Endothelial cell of umbilical vein (primary cell): ENCODE measurements at regions of chr1 and their contacts with region 1.

Region 1: GRCh38 chr1:181134543-181135362 is 46.3 kb downstream of the IER5 start:
- DNase-seq: peak; percentile 75
- H3K4me3 ChIP-seq: no peak overlapping the region
- H3K27ac ChIP-seq: peak overlapping the region; percentile 74
- H3K4me1 ChIP-seq: peaks cover 26% of the 10 kb centered on the region
- H3K27me3 ChIP-seq: no peaks in the 10 kb centered on the region
- CTCF ChIP-seq: no peak
- POLR2A ChIP-seq: no peak

Region 2: DNA sequence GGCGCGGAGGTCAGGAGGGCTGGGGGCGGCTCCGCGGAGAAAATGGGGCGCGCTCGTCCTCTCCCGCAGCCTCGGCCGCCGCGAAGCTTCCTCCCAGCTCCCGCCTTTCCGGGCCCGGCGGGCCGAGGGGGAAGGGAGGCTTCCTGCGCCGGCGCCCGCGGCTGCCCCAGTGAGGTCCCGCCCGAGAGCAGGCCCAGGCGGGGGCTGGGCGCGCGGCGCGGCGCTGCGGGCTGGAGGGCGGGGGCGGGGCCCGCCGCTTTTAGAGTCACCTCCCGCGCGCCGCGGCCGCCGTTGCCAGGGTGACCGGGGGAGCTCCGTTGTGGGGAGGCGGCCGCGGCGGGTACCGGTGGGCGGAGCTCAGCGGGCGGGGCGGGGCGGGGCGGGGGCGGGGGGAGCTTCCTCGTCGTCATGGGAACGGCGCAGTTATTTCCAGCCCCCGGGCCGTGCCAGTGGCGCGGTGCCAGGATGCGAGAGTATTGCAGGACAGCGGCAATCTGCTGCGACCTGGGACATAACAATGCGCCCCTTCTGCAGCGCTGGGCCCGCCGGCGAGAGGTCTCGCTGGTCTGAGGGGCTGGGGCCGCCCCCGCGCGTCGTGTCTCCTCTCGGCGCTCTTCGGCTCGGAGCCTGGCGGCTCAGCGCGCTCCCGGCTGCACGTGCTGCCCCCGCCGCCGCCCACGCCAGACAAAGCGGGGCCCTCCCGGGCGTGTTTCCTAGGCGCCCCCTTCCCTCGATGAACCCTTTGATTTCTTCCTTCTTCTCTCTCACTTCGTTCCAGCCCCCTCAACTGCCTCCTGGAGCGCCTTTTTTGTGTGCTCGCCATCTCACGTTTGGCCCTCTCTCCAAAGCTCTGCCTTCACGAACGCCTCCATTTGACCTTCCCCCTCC is 29.4 kb before region 1 on chr1:
- CTCF ChIA-PET with region 1: interaction called, 42 read pairs
- POLR2A ChIA-PET with region 1: interaction called, 25 read pairs
- dilution Hi-C with region 1: no loop called
- intact Hi-C with region 1: loop called (anchors 1 kb)
- DNase-seq: peak; percentile 86
- H3K4me3 ChIP-seq: peak overlapping the region; percentile 44 to 63 (median 46)
- H3K27ac ChIP-seq: peak overlapping the region; percentile 90
- H3K4me1 ChIP-seq: peaks cover 58% of the 10 kb centered on the region
- H3K27me3 ChIP-seq: no peaks in the 10 kb centered on the region
- CTCF ChIP-seq: no peak
- POLR2A ChIP-seq: peak; percentile 43

Region 3: DNA sequence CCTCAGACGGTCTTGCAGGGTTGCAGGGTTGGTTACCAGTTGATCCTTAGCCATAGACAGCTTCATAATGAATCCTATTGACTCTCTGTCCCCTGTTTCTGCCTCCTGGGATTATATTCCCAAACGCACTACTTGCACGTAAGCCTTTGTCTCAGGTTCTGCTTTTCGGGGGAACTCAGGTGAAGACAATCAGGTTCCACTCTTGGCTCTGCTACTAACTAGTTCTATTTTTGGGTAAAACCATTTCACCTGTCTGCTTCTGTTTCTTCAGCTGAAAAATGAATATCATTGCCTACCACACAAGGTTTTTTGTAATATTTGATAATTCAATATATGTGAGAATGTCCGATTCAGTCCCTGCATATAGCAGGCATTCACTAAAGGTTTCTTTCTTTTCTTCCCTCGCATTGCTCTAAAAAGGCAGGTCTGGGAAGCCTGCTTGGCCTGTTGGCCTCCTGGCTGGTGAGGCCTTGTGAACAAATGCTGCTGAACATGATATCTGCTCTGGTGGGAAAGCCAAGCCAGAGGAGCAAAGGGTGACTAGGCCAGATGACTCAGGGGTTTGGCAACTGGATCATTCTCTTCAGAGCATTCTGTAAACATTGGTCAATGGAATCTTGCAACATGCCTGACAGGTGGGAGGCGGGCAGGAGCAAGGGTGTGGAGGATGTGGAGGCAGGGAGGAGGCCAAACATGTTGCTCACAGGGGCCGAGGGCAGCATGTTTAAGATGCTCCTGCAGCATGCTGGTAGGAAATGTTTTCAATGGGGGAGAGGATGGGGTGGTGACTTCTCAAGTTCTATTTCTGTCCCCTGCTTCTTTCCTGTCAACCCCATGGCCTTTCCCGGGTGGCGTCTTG is 22.5 kb before region 1 on chr1:
- CTCF ChIA-PET with region 1: interaction called, 42 read pairs
- POLR2A ChIA-PET with region 1: no interaction called
- dilution Hi-C with region 1: no loop called
- intact Hi-C with region 1: loop called (anchors 1 kb)
- DNase-seq: peak; percentile 87
- H3K4me3 ChIP-seq: no peak overlapping the region
- H3K27ac ChIP-seq: no peak overlapping the region
- H3K4me1 ChIP-seq: peaks cover 23% of the 10 kb centered on the region
- H3K27me3 ChIP-seq: no peaks in the 10 kb centered on the region
- CTCF ChIP-seq: no peak
- POLR2A ChIP-seq: no peak

Region 4: DNA sequence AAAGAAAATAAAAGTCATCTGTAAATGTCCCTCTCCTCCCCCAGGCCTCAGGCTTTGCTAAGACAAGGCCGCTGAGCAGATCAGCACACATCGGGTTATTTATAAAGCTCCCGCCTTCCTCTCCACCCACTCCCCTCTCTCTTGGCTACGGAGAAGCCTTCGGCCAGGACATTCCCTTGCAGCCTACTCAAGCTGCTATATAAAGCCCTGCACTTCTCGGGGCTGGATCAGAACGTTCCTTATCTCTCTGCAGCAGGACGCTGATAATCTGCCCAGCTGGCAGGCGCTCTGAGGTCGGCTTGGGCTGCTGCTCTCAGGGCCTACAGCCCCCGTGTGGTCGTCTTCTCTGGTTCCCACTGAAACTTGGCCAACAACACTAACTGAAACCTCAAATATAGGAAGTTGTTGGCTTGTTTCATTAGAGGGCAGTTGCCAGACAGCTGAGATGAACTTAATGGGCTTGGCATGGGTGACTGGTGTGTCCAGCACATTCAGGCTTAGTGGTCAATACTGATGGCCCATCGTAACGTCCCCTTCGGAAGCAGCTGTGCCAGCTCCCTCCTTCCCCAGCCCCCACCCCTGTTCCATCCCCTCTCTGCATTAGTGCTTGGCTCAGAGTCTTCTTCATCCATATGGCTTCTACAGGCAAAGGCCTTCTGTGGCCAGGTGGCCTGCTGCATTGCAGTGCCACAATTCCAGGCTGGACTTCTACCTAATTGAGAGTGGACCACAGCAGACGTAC is 18.3 kb after region 1 on chr1:
- CTCF ChIA-PET with region 1: interaction called, 10 read pairs
- POLR2A ChIA-PET with region 1: interaction called, 4 read pairs
- dilution Hi-C with region 1: no loop called
- intact Hi-C with region 1: no loop called
- DNase-seq: peak; percentile 98
- H3K4me3 ChIP-seq: no peak overlapping the region
- H3K27ac ChIP-seq: no peak overlapping the region
- H3K4me1 ChIP-seq: peaks cover 7% of the 10 kb centered on the region
- H3K27me3 ChIP-seq: no peaks in the 10 kb centered on the region
- CTCF ChIP-seq: peak; percentile 31 to 72
- POLR2A ChIP-seq: no peak

Region 5: DNA sequence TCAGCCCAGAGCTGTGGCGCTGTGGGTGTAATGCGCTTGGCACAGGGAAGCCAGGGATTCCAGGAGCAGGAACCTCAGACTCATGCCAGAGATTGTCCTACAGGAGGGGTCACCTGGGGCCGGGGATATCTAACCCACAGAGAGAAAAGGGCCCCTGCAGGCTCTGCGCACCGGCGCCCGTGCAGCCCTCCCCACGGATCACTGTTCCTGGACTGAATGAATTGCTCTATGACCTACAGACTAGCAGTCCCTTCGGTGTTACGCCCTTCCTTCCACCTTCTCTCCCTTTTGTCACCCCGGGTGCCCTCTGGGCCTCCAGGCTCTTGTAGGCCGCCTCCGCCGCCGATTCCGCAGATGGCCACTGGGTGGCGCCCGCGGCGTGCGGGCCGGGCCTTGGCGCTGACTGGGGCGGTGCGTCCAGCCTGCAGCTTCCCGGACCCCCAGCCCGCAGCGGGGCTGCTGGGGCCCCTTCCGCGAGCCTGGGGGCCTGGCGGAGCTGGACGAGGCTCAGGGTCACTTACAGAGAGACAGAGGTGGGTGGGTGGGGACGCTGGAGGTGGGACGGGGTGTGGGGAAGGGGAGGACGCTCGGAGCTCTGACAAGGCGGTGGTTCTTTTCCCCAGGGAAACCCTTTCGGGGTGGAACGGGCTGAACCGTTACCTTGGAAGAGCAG is 55.1 kb after region 1 on chr1:
- CTCF ChIA-PET with region 1: no interaction called
- POLR2A ChIA-PET with region 1: no interaction called
- dilution Hi-C with region 1: no loop called
- intact Hi-C with region 1: no loop called
- DNase-seq: peak; percentile 54
- H3K4me3 ChIP-seq: no peak overlapping the region
- H3K27ac ChIP-seq: no peak overlapping the region
- H3K4me1 ChIP-seq: no peaks in the 10 kb centered on the region
- H3K27me3 ChIP-seq: peaks cover 0 to 13% of the 10 kb centered on the region in 2 experiments
- CTCF ChIP-seq: peak; percentile 95 to 97
- POLR2A ChIP-seq: no peak